AG04449 (cell line): ENCODE measurements at regions of chr13 and their contacts with region 1.

Region 1: GRCh38 chr13:26186118-26186870 is 35.8 kb downstream of the RNF6 start:
- DNase-seq: peak; percentile 49
- H3K4me3 ChIP-seq: peak overlapping the region; percentile 66
- CTCF ChIP-seq: peak; percentile 49

Region 2: DNA sequence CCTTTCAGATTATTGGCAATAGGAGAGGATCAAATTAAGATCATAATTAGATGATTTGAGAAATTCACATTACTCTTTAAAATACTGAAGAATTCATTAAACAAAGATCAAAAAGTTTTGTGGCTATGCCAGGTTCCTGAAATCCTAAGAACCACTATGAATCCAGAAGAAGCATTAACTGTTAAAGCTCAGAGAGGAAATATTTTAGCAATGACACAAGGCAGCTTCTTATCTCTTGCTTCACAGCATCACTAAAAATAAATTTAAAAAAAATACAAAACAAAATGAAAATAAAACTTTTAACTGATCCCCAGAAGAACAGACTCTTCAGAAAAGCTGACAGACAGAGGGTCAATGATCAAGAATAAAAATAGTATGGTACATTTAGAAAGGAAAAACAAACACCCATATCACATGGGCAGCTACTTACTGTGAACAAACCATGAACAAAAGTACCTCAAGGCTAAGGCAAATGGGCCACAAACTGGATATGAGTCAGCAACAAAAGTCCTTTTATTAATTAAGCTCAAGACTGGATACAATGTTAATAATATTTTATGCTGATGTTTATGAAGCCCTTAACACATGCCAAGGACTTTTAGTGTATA is 16.2 kb after region 1 on chr13:
- CTCF ChIA-PET with region 1: interaction called, 46 read pairs
- POLR2A ChIA-PET with region 1: interaction called, 3 read pairs
- DNase-seq: no peak
- H3K4me3 ChIP-seq: no peak overlapping the region
- CTCF ChIP-seq: no peak

Region 3: GRCh38 chr13:26482451-26483197 is 296.3 kb after region 1 on chr13:
- CTCF ChIA-PET with region 1: interaction called, 62 read pairs
- POLR2A ChIA-PET with region 1: no interaction called
- DNase-seq: no peak
- H3K4me3 ChIP-seq: no peak overlapping the region
- CTCF ChIP-seq: peak; percentile 77

Region 4: GRCh38 chr13:26563713-26564112 is 377.4 kb after region 1 on chr13:
- CTCF ChIA-PET with region 1: interaction called, 13 read pairs
- POLR2A ChIA-PET with region 1: no interaction called
- DNase-seq: no peak
- H3K4me3 ChIP-seq: no peak overlapping the region
- CTCF ChIP-seq: no peak

Region 5: GRCh38 chr13:26698392-26699196 is 512.3 kb after region 1 on chr13:
- CTCF ChIA-PET with region 1: interaction called, 196 read pairs
- POLR2A ChIA-PET with region 1: interaction called, 4 read pairs
- DNase-seq: peak; percentile 36
- H3K4me3 ChIP-seq: peak overlapping the region; percentile 18
- CTCF ChIP-seq: peak; percentile 94